Activated T-helper 1 cell treated with anti-CD3 and anti-CD28 coated beads, Interleukin-12 subunit alpha, Interleukin-12 subunit beta, Interleukin-2, Interleukin-4 antibody, amounts not matched to agents 30 ng/mL and 10 ng/mL and 1 ng/mL, durations not matched to agents 14 hours and 24 hours and 36 hours (primary cell): ENCODE measurements at regions of chr15 and their contacts with region 1.

Region 1: GRCh38 chr15:83283138-83283812 is 1.2 kb downstream of the BNC1 start:
- DNase-seq: no peak
- H3K4me3 Mint-ChIP-seq: peak overlapping the region; percentile 11
- H3K27ac Mint-ChIP-seq: no peak overlapping the region
- H3K4me1 Mint-ChIP-seq: no peaks in the 10 kb centered on the region
- H3K27me3 Mint-ChIP-seq: peaks cover 66% of the 10 kb centered on the region

Region 2: DNA sequence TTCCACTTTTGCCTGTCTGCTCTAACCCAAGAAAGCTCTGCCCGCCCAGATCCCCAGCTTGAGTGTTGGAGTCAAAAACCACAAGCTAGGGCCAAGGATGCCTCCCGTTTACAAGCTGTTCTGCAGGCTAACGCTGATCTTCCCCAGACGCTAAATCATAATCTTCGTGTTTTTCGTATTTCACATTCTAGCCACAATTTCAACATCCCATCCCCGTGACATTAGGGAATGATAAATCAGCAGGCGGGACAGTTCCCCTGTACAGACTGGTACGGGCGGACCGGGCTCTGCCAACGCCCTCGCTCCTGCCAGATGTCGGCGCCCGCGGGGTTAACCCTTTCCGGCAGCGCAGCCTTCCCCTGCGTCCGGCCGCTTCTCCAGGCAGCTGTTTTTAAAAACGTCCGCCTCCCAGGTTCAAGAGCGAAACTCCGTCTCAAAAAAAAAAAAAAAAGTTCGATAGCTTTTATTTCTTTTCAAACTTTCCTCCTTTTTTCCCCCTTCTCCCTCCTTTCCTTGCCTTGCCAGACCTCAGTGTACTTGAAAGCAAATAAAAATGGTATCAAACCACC is 82.2 kb after region 1 on chr15:
- intact Hi-C with region 1: loop called (anchors 5 kb)
- DNase-seq: no peak
- H3K4me3 Mint-ChIP-seq: peak overlapping the region; percentile 12
- H3K27ac Mint-ChIP-seq: no peak overlapping the region
- H3K4me1 Mint-ChIP-seq: peaks cover 10% of the 10 kb centered on the region
- H3K27me3 Mint-ChIP-seq: peaks cover 51% of the 10 kb centered on the region